ENCODE measurements at regions of chr13 and their contacts with region 1.

Region 1: DNA sequence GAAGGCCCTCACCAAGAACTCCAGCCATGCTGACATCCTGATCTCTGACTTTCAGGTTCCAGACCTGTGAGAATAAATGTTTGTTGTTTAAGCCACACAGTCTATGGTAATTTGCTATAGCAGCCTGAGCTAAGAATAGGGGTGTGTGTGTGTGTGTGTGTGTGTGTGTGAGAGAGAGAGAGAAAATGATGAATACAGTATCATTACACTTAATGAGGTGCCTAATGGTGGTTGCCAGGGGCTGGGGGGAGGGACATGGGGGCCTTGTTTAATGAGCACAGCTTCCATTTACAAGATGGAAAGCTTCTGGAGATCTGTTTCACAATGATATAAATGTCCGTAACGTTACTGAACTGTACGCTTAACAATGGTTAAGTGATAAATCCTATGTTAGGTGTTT is 53.8 kb upstream of the LATS2 start:
- DNase-seq: no peak
- ATAC-seq: no peak
- H3K4me3 ChIP-seq: no peak overlapping the region
- H3K27ac ChIP-seq: no peak overlapping the region
- H3K4me1 ChIP-seq: no peaks in the 10 kb centered on the region
- H3K27me3 ChIP-seq: no peaks in the 10 kb centered on the region
- CTCF ChIP-seq: no peak
- EP300 ChIP-seq: no peak
- POLR2A ChIP-seq: no peak
- RAD21 ChIP-seq: no peak

Region 2: DNA sequence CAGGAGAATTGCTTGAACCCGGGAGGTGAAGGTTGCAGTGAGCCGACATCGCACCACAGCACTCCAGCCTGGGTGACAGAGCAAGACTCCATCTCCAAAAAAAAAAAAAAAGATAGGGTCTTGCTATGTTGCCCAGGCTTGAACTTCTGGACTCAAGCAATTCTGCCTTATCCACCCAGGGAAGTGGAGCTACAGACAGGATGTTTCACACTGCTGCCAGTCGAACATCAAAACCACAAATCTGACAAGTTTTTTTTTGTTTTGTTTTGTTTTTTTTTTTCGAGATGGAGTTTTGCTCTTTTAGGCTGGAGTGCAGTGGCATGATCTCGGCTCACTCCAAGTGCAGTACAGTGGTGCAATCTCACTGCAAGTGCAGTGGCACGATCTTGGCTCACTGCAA is 223.5 kb before region 1 on chr13:
- CTCF ChIA-PET with region 1: no interaction called
- POLR2A ChIA-PET with region 1: no interaction called
- RAD21 ChIA-PET with region 1: no interaction called
- SMC1A ChIA-PET with region 1: no interaction called
- in situ Hi-C with region 1: no loop called
- intact Hi-C with region 1: no loop called
- DNase-seq: no peak
- ATAC-seq: no peak
- H3K4me3 ChIP-seq: no peak overlapping the region
- H3K27ac ChIP-seq: no peak overlapping the region
- H3K4me1 ChIP-seq: no peaks in the 10 kb centered on the region
- H3K27me3 ChIP-seq: no peaks in the 10 kb centered on the region
- CTCF ChIP-seq: no peak
- EP300 ChIP-seq: no peak
- POLR2A ChIP-seq: no peak
- RAD21 ChIP-seq: no peak

Region 3: GRCh38 chr13:20940083-20940880 is 174.9 kb before region 1 on chr13:
- CTCF ChIA-PET with region 1: interaction called, 3 read pairs
- POLR2A ChIA-PET with region 1: no interaction called
- RAD21 ChIA-PET with region 1: no interaction called
- SMC1A ChIA-PET with region 1: no interaction called
- in situ Hi-C with region 1: no loop called
- intact Hi-C with region 1: loop called (anchors 5 kb)
- DNase-seq: no peak
- ATAC-seq: no peak
- H3K4me3 ChIP-seq: no peak overlapping the region
- H3K27ac ChIP-seq: no peak overlapping the region
- H3K4me1 ChIP-seq: no peaks in the 10 kb centered on the region
- H3K27me3 ChIP-seq: no peaks in the 10 kb centered on the region
- CTCF ChIP-seq: no peak
- EP300 ChIP-seq: no peak
- POLR2A ChIP-seq: no peak
- RAD21 ChIP-seq: no peak

Region 4: DNA sequence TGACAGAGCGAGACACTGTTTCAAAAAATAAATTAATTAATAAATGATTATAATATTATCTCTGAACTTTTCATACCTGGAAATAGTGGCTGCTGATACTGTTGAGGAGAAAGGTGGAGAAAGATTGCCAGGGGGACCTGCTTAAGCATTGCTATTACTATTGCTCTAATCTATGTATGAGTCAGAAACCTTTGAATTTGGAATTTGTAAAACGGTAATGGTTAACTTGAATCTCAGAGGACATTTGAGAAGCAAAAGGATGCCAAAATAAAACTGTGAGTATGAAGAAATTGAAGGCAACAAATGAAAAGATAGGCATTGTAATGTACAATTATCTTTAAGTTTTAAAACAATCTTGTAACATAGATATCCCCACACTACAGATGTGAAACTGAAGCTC is 66.4 kb after region 1 on chr13:
- CTCF ChIA-PET with region 1: interaction called, 11 read pairs
- POLR2A ChIA-PET with region 1: no interaction called
- RAD21 ChIA-PET with region 1: interaction called, 4 read pairs
- SMC1A ChIA-PET with region 1: interaction called, 4 read pairs
- in situ Hi-C with region 1: loop called (anchors 5 kb)
- intact Hi-C with region 1: loop called (anchors 1 kb)
- DNase-seq: no peak
- ATAC-seq: no peak
- H3K4me3 ChIP-seq: no peak overlapping the region
- H3K27ac ChIP-seq: no peak overlapping the region
- H3K4me1 ChIP-seq: no peaks in the 10 kb centered on the region
- H3K27me3 ChIP-seq: no peaks in the 10 kb centered on the region
- CTCF ChIP-seq: no peak
- EP300 ChIP-seq: no peak
- POLR2A ChIP-seq: no peak
- RAD21 ChIP-seq: no peak

Measured in GM12878 (cell line).